Mammary epithelial cell (primary cell): ENCODE measurements at regions of chr9 and their contacts with region 1.

Region 1: DNA sequence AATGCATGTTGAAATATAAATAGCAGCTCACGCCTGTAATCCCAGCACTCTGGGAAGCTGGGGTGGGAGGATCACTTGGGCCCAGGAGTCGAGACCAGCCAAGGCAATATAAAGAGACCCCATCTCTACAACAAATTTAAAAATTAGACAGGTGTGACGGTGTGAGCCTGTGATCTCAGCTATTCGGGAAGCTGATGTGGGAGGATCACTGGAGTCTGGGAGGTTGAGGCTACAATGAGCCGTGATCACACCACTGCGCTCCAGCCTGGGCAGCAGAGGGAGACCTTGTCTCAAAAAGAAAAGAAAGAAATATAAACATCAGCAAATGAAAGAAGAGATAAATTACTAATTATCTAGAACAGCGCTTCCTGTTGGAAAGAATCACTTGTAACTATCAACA is 105.0 kb downstream of the MAPKAP1 start:
- DNase-seq: no peak
- H3K4me3 ChIP-seq: no peak overlapping the region
- H3K27ac ChIP-seq: no peak overlapping the region
- H3K4me1 ChIP-seq: no peaks in the 10 kb centered on the region
- H3K27me3 ChIP-seq: no peaks in the 10 kb centered on the region
- CTCF ChIP-seq: peak in 1 of 2 donors; percentile 21

Region 2: DNA sequence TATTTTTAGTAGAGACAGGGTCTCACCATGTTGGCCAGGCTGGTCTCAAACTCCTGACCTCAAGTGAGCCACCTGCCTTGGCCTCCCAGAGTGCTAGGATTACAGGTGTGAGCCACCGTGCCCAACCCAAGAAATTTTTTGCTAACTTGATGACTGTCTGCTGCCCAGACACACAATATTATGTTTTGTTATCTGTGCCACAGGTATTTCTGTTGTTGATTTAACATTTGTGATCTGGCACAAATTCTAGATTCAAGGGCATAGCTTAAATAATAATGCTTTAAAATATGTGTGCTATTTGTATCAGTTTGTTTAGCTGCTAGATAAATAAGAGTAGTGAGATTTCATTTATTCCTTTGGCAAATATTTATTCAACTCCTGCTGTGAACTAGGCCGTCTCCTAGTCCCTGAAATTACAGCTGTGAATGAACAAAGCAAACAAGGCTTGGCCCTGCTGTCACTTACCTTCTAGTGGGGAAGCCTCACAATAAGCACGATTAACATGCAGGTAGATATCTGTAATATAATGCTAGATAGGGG is 305.1 kb before region 1 on chr9:
- CTCF ChIA-PET with region 1: interaction called, 16 read pairs
- dilution Hi-C with region 1: no loop called
- in situ Hi-C with region 1: no loop called
- intact Hi-C with region 1: no loop called
- DNase-seq: no peak
- H3K4me3 ChIP-seq: no peak overlapping the region
- H3K27ac ChIP-seq: no peak overlapping the region
- H3K4me1 ChIP-seq: peaks cover 6% of the 10 kb centered on the region
- H3K27me3 ChIP-seq: no peaks in the 10 kb centered on the region
- CTCF ChIP-seq: no peak

Region 3: GRCh38 chr9:125544988-125545651 is 56.8 kb before region 1 on chr9:
- CTCF ChIA-PET with region 1: no interaction called
- dilution Hi-C with region 1: no loop called
- in situ Hi-C with region 1: no loop called
- intact Hi-C with region 1: no loop called
- DNase-seq: no peak
- H3K4me3 ChIP-seq: no peak overlapping the region
- H3K27ac ChIP-seq: no peak overlapping the region
- H3K4me1 ChIP-seq: peaks cover 10% of the 10 kb centered on the region
- H3K27me3 ChIP-seq: no peaks in the 10 kb centered on the region
- CTCF ChIP-seq: no peak